Activated B cell treated with CpG ODN at 0.5 μM for 24 hours (primary cell): ENCODE measurements at regions of chr4 and their contacts with region 1.

Region 1: GRCh38 chr4:37603070-37603468 is 83.1 kb downstream of the RELL1 start:
- DNase-seq: peak; percentile 59
- ATAC-seq: peak; percentile 84
- H3K4me3 Mint-ChIP-seq: no peak overlapping the region
- H3K27ac Mint-ChIP-seq: no peak overlapping the region
- H3K4me1 Mint-ChIP-seq: peaks cover 3% of the 10 kb centered on the region
- H3K27me3 Mint-ChIP-seq: peaks cover 2% of the 10 kb centered on the region
- CTCF ChIP-seq: peak; percentile 95

Region 2: GRCh38 chr4:37780444-37781150 is 177.5 kb after region 1 on chr4:
- CTCF ChIA-PET with region 1: interaction called, 8 read pairs
- POLR2A ChIA-PET with region 1: no interaction called
- intact Hi-C with region 1: loop called (anchors 1 kb)
- DNase-seq: no peak
- ATAC-seq: no peak
- H3K4me3 Mint-ChIP-seq: no peak overlapping the region
- H3K27ac Mint-ChIP-seq: no peak overlapping the region
- H3K4me1 Mint-ChIP-seq: peaks cover 7% of the 10 kb centered on the region
- H3K27me3 Mint-ChIP-seq: no peaks in the 10 kb centered on the region
- CTCF ChIP-seq: no peak

Region 3: DNA sequence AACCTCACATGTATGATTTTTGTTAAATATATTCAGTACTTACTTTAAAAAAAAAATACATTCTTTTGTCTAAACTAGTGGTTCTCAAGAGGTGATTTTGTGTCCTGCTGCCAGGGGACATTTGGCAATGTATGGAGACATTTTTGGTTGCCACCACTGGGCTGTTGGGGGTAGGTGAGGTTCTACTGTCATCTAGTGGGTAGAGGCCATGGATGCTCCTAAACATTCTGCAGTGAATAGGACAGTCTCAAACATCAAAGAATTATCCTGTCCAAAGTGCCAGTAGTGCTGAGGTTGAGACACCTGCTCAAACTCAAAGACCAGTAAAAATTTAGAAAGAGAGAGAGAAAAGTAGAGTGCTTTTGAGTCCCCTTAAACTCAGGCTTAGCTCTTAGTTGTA is 190.5 kb after region 1 on chr4:
- CTCF ChIA-PET with region 1: interaction called, 19 read pairs
- POLR2A ChIA-PET with region 1: no interaction called
- intact Hi-C with region 1: loop called (anchors 1 kb)
- DNase-seq: no peak
- ATAC-seq: peak; percentile 47
- H3K4me3 Mint-ChIP-seq: no peak overlapping the region
- H3K27ac Mint-ChIP-seq: no peak overlapping the region
- H3K4me1 Mint-ChIP-seq: no peaks in the 10 kb centered on the region
- H3K27me3 Mint-ChIP-seq: peaks cover 3% of the 10 kb centered on the region
- CTCF ChIP-seq: no peak